ENCODE measurements at regions of chr13 and their contacts with region 1.

Region 1: DNA sequence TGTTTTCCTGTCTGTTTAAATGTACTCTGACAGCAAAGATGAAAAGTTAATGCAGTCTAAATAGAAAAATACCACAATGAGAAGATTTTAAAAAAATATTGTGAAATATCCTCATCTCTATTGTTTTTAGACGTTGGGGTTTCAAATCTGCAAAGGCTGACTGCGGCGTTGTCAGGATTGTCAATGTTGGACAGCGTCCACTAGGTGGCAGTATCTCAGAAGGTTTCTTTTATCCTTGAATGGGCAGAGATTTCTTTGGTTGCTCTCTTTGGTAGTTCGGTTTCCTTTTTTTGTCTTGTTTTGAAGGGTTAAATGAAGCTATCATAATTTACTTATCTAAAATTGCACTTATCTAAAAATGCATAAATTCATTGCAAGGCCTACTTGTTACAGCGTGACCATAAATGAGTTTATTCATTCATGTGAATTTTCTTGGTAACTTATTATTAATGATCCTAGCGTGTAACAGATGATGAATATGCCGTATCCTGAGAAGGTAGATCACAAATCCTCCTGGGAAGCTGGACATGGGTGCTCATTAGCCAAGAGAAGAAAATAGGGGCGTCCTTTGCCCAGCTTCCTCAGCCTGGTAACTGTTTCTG is 21.1 kb downstream of the TNFSF11 start:
- DNase-seq: peak; percentile 25
- ATAC-seq: no peak
- H3K4me3 ChIP-seq: no peak overlapping the region
- H3K27ac ChIP-seq: no peak overlapping the region
- H3K4me1 ChIP-seq: no peaks in the 10 kb centered on the region
- H3K27me3 ChIP-seq: peaks cover 2% of the 10 kb centered on the region; the same call in 1 of the 2 replicates
- CTCF ChIP-seq: peak; percentile 73

Region 2: DNA sequence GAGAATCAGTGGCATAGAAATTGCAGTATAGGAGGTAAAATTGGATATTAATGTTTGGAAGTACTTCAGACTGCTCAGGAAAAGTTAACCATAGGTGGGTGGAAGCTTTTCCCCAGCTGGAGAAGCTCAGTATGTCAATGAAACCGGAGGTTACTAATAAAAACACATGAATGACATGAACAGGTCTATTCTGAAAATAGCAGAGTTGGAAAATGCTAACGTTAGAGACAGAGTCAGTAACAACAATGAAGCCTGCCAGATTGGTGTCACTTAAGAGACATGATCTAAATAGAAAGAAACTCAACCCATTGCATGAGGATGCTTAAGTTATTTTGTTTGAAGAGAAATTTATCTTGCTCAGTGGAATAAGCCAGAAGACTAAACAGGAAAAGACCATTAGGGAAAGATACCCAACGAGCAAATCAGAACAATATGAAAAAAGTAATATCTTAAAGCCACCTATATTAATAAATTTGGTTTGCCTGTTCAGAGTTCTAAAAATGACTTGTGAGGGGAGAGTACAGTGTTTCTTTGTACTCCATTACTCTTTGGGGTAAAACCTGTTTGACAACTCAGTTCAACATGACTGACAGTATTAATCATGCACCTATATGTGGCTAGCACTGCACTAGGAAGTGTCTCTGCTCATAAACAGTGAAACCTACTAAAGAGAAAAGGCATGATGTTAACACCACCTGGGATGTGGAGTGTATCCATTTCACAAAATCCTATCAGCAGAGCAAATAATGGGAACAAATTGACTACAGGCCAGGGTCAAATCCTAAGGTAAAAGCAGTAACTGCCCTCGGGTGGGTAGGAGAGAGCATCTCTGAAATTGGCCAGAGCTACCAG is 793.0 kb after region 1 on chr13:
- CTCF ChIA-PET with region 1: no interaction called
- POLR2A ChIA-PET with region 1: no interaction called
- in situ Hi-C with region 1: no loop called
- intact Hi-C with region 1: no loop called
- DNase-seq: no peak
- ATAC-seq: no peak
- H3K4me3 ChIP-seq: no peak overlapping the region
- H3K27ac ChIP-seq: no peak overlapping the region
- H3K4me1 ChIP-seq: no peaks in the 10 kb centered on the region
- H3K27me3 ChIP-seq: no peaks in the 10 kb centered on the region
- CTCF ChIP-seq: no peak

Region 3: GRCh38 chr13:43815204-43815603 is 1220.1 kb after region 1 on chr13:
- CTCF ChIA-PET with region 1: no interaction called
- POLR2A ChIA-PET with region 1: no interaction called
- in situ Hi-C with region 1: no loop called
- intact Hi-C with region 1: loop called (anchors 5 kb)
- DNase-seq: no peak
- ATAC-seq: no peak
- H3K4me3 ChIP-seq: no peak overlapping the region
- H3K27ac ChIP-seq: no peak overlapping the region
- H3K4me1 ChIP-seq: no peaks in the 10 kb centered on the region
- H3K27me3 ChIP-seq: no peaks in the 10 kb centered on the region
- CTCF ChIP-seq: no peak

Measured in Panc1 (cell line).